ENCODE measurements at regions of chr12 and their contacts with region 1.

Region 1: DNA sequence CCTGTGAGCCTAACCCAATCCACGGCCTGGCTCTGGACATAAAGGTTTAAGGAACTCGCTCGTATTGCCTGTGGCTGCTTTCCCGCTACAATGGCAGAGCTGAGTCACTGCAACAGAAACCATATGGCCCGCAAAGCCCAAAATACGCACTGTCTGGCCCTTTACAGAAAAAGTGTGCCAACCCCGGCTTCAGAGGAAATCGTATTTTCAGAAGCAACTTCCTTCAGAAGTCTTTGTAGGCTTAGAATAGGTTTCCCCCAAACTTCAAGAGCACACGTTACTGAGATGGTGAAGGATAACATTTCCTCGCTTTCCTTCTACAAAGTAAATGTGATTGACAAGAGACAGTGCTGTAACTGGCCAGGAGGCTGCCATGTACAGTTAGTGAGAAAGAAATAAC is 34.8 kb upstream of the TESC start:
- DNase-seq: peak; percentile 84
- H3K4me3 Mint-ChIP-seq: peak overlapping the region; percentile 30
- H3K27ac Mint-ChIP-seq: peak overlapping the region; percentile 86
- H3K4me1 Mint-ChIP-seq: peaks cover 19% of the 10 kb centered on the region
- H3K27me3 Mint-ChIP-seq: no peaks in the 10 kb centered on the region

Region 2: GRCh38 chr12:116955382-116956021 is 178.6 kb before region 1 on chr12:
- CTCF ChIA-PET with region 1: no interaction called
- POLR2A ChIA-PET with region 1: no interaction called
- intact Hi-C with region 1: loop called (anchors 1 kb)
- DNase-seq: peak; percentile 12
- H3K4me3 Mint-ChIP-seq: no peak overlapping the region
- H3K27ac Mint-ChIP-seq: no peak overlapping the region
- H3K4me1 Mint-ChIP-seq: peaks cover 20% of the 10 kb centered on the region
- H3K27me3 Mint-ChIP-seq: no peaks in the 10 kb centered on the region

Region 3: DNA sequence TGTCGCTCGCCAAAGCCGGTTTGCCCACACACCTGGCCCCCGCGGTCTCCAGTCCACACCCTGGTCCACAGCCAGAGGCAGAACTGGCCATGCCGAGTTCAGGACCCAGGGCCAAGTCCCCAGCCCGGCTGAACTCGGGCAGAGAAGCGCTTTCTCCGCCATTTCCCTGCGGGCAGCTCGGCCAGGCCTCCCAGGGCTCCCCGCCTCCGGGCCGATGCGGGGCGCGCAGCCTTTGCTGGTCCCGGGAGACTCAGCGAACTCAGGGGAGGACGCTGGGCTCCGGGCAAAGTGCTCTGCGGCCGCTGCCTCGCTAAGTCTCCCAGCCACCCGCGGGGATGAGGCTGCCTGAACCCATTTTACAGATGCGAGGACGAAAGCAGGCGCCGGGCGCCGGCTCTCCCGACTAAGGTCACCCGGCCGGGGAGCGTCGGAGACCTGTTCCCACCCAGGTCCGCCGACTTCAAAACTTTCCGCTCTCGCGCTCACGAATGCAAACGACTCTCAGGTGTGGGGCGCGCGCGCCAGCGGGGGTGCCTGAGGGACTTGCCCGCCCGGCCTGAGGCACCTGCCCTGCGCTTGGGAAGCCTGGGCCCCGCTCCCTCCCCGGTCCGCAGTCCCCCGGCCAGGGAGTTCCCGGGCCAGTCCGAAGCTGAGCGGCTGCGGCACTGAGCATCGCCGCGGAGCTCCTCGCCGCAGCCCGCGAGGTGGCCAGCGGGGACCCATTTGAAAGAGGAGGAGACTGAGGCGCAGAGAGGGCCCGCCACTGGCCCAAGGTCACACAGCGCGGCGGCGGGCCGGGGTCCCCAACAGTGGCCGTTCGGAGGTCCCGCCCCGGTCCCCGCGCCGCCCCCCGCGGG is 35.5 kb before region 1 on chr12:
- CTCF ChIA-PET with region 1: no interaction called
- POLR2A ChIA-PET with region 1: no interaction called
- intact Hi-C with region 1: loop called (anchors 2 kb)
- DNase-seq: peak; percentile 51
- H3K4me3 Mint-ChIP-seq: peak overlapping the region; percentile 70
- H3K27ac Mint-ChIP-seq: no peak overlapping the region
- H3K4me1 Mint-ChIP-seq: peaks cover 3% of the 10 kb centered on the region
- H3K27me3 Mint-ChIP-seq: peaks cover 20% of the 10 kb centered on the region

Region 4: GRCh38 chr12:117119592-117120198 is 14.4 kb before region 1 on chr12:
- CTCF ChIA-PET with region 1: interaction called, 12 read pairs
- POLR2A ChIA-PET with region 1: no interaction called
- intact Hi-C with region 1: no loop called
- DNase-seq: peak; percentile 33
- H3K4me3 Mint-ChIP-seq: no peak overlapping the region
- H3K27ac Mint-ChIP-seq: no peak overlapping the region
- H3K4me1 Mint-ChIP-seq: no peaks in the 10 kb centered on the region
- H3K27me3 Mint-ChIP-seq: no peaks in the 10 kb centered on the region

Region 5: GRCh38 chr12:117155278-117156060 is 21.4 kb after region 1 on chr12:
- CTCF ChIA-PET with region 1: interaction called, 4 read pairs
- POLR2A ChIA-PET with region 1: no interaction called
- intact Hi-C with region 1: loop called (anchors 1 kb)
- DNase-seq: peak; percentile 89
- H3K4me3 Mint-ChIP-seq: no peak overlapping the region
- H3K27ac Mint-ChIP-seq: no peak overlapping the region
- H3K4me1 Mint-ChIP-seq: peaks cover 33% of the 10 kb centered on the region
- H3K27me3 Mint-ChIP-seq: no peaks in the 10 kb centered on the region

Region 6: DNA sequence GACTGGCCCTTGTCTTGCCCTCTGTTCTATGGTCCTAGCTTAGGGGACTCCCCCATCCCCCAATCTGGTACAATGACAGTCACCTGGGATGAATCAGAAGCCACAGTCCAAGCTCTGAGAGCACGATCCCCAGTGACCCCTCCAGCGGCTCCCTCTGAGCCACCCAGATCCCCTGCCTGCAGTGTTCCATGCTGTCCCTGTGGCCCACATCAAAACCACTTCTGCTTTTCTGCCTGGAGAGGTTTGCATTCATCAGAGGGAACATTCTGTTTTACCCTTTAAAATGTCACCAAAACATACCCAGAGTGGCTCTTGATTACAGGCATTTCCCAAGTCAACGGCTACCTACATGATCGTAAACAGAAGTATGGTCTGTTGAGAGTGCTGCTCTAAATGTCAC is 179.9 kb after region 1 on chr12:
- CTCF ChIA-PET with region 1: no interaction called
- POLR2A ChIA-PET with region 1: no interaction called
- intact Hi-C with region 1: no loop called
- DNase-seq: no peak
- H3K4me3 Mint-ChIP-seq: no peak overlapping the region
- H3K27ac Mint-ChIP-seq: no peak overlapping the region
- H3K4me1 Mint-ChIP-seq: no peaks in the 10 kb centered on the region
- H3K27me3 Mint-ChIP-seq: no peaks in the 10 kb centered on the region

Measured in activated CD4-positive, alpha-beta memory T cell treated with anti-CD3 and anti-CD28 coated beads for 36 hours (primary cell).